Cardiac septum (tissue), 1 donor: ENCODE measurements at regions of chr1 and their contacts with region 1.

Region 1: GRCh38 chr1:224851210-224851847 is 78.1 kb upstream of the DNAH14 start:
- DNase-seq: peak; percentile 80

Region 2: GRCh38 chr1:224513787-224514209 is 337.5 kb before region 1 on chr1:
- intact Hi-C with region 1: loop called (anchors 2 kb)
- DNase-seq: peak; percentile 91

Region 3: GRCh38 chr1:224644553-224645154 is 206.7 kb before region 1 on chr1:
- intact Hi-C with region 1: loop called (anchors 5 kb)
- DNase-seq: no peak

Region 4: DNA sequence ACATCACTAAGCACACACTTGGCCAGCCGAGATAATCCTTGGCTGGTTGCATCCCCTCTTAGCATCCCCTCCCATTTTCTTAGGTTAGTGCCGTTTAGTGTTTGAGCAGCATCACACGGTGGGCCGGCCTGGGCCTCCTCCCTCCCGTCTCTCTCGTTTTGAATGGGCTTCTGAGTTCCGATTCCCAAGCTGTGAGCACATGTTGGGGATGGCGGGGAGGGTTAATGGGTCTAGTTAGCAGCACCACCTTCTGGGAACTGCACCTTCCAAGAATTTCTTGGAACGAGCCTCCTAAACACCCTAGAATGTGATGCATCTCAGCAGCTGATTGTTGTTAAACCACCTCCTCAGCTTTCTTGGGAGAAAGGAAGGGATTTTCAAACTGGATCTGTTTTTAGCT is 162.0 kb before region 1 on chr1:
- intact Hi-C with region 1: no loop called
- DNase-seq: no peak

Region 5: GRCh38 chr1:224747578-224747977 is 103.8 kb before region 1 on chr1:
- intact Hi-C with region 1: no loop called
- DNase-seq: no peak

Region 6: GRCh38 chr1:224867715-224868114 is 16.4 kb after region 1 on chr1:
- intact Hi-C with region 1: no loop called
- DNase-seq: no peak